ENCODE measurements at regions of chr20 and their contacts with region 1.

Region 1: GRCh38 chr20:35303735-35304491 is 11.7 kb upstream of the FAM83C start:
- DNase-seq: peak in 4 of 5 donors; percentile 87 to 93 (median 90)
- H3K4me3 ChIP-seq: no peak overlapping the region
- H3K27ac ChIP-seq: no peak overlapping the region
- H3K4me1 ChIP-seq: peaks cover 0 to 15% (median 8%) of the 10 kb centered on the region in 3 donors
- H3K27me3 ChIP-seq: no peaks in the 10 kb centered on the region
- CTCF ChIP-seq: peak; percentile 91

Region 2: GRCh38 chr20:35443003-35443402 is 139.1 kb after region 1 on chr20:
- intact Hi-C with region 1: loop called (anchors 5 kb)
- DNase-seq: no peak
- H3K4me3 ChIP-seq: no peak overlapping the region
- H3K27ac ChIP-seq: no peak overlapping the region
- H3K4me1 ChIP-seq: peaks cover 0 to 4% (median 0%) of the 10 kb centered on the region in 3 donors
- H3K27me3 ChIP-seq: no peaks in the 10 kb centered on the region
- CTCF ChIP-seq: no peak